Gastrocnemius medialis (tissue), 4 donors: ENCODE measurements at regions of chr16 and their contacts with region 1.

Region 1: GRCh38 chr16:8868416-8869211 is at the start of gene CARHSP1:
- DNase-seq: peak; percentile 68 to 77
- ATAC-seq: peak; percentile 81 to 90
- H3K4me3 ChIP-seq: peak within 1 kb of the TSS; percentile 68 to 94 (median 78)
- H3K27ac ChIP-seq: peak within 1 kb of the TSS; percentile 69 to 80 (median 76)
- H3K4me1 ChIP-seq: peaks cover 23 to 39% of the 10 kb centered on the region in 2 donors
- H3K27me3 ChIP-seq: peaks cover 32 to 37% (median 34%) of the 10 kb centered on the region in 3 donors
- CTCF ChIP-seq: no peak
- POLR2A ChIP-seq: peak; percentile 60 to 70
- total RNA-seq, gene CARHSP1: 12.4 to 22.3 (median 18.4) TPM

Region 2: DNA sequence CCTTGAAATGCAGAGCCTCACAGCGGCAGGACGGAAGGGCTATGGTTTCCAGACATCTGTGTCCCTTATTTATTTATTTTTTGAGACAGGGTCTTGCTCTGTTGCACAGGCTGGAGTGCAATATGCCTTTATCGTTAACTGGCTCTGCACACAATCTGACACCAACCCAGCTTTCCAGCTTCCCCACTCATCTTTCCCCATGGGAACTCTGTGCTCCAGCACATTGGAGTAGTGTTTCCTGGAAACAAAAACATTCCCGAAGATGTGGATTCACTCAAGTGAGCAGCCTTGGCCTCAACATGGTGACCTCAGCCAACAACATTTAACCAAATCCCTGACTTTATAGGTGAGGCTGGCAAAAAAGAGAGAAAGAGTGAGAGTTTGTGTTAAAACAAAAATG is 585.4 kb before region 1 on chr16:
- in situ Hi-C with region 1: no loop called
- intact Hi-C with region 1: no loop called
- DNase-seq: no peak
- ATAC-seq: no peak
- H3K4me3 ChIP-seq: no peak overlapping the region
- H3K27ac ChIP-seq: no peak overlapping the region
- H3K4me1 ChIP-seq: no peaks in the 10 kb centered on the region
- H3K27me3 ChIP-seq: no peaks in the 10 kb centered on the region
- CTCF ChIP-seq: no peak
- POLR2A ChIP-seq: no peak

Region 3: DNA sequence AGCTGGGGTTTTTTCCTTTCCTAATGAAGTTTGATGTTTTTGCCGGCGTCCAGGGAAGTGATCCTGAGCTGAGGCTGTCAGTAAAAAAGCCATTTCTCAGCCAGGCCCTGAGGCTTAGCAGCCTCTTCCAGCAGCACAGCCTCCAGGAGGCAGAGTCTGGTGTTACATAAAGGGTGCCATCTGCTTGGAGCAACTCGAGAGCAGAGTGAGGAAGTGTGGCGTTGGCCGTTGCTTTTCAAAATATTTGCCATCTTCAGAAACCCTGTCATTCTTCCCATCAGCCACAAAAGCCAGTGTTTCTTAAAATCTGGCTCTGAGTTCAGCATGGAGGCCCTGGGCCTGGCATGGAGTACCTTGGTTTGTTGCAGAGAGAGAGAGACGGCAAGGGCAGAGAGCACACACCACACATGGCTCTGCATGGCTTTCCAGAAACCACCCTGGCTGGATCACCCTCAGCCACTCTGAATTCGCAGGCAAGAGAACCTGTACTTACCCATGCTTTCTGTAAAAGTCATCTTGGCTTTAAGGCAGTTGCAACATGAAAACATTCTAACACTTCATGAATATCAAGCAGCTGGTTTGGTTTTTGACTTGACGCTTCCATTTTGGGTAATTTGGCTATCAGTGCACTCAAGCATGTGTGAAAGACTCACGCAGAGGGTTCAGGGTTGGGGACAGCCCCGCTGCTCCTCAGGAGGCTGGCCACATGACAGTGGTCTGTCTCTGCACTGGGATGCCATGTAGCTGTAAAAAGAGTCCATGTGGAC is 49.9 kb before region 1 on chr16:
- in situ Hi-C with region 1: no loop called
- intact Hi-C with region 1: loop called (anchors 5 kb)
- DNase-seq: no peak
- ATAC-seq: no peak
- H3K4me3 ChIP-seq: no peak overlapping the region
- H3K27ac ChIP-seq: no peak overlapping the region
- H3K4me1 ChIP-seq: no peaks in the 10 kb centered on the region
- H3K27me3 ChIP-seq: no peaks in the 10 kb centered on the region
- CTCF ChIP-seq: no peak
- POLR2A ChIP-seq: no peak

Region 4: DNA sequence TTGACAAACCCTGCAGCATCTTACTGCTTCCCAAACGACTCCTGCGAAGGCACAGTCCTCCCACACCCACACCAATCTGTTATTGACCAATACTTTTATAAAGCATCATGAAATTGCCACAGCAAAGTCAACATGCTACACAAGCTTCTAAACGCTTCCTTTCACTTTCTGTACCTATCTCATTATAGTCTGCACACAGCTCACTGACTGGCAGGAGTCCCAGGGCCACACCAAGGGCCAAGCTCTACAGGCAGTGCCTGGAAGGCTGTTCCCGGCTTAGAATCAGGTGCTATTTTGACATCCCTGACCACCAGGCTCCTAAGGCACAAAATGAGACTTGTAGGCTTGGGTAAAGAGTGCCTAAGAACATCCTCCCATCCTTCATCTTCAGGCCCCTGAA is 55.6 kb after region 1 on chr16:
- in situ Hi-C with region 1: no loop called
- intact Hi-C with region 1: no loop called
- DNase-seq: peak in 1 of 2 donors; percentile 59
- ATAC-seq: peak in 1 of 2 donors; percentile 81
- H3K4me3 ChIP-seq: no peak overlapping the region
- H3K27ac ChIP-seq: no peak overlapping the region
- H3K4me1 ChIP-seq: peaks cover 0 to 25% of the 10 kb centered on the region in 2 donors
- H3K27me3 ChIP-seq: no peaks in the 10 kb centered on the region
- CTCF ChIP-seq: no peak
- POLR2A ChIP-seq: no peak

Region 5: DNA sequence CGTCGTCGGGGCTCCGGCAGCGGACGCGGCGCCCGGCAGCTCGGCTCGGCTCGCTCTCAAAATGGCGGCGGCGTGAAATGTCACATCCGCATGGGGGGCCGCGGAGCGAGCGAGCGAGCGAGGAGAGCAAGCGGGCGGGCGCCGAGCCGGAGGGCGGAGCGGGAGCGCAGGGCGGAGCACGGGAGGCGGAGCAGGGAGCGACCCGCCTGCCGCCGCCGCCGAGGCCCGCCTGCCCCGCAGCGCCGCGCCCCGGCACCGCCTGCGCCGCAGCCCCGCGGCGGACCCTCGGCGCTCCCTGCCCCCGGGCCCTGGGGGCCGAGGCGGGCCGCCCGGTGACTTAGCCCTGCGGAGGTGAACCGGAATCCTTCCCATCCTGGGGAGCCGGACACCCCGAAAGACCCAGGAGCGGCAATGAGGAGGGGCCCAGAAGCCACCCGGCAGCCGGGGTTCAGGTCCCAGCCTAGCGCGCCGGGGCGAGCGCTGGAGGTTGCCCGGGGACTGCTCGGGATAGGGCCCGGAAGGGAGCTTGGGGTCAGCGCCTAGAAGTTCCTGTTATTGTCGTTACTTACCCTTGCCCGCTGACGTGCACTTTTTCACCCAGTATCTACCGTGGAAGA is 95.3 kb after region 1 on chr16 and contains the start of gene USP7:
- in situ Hi-C with region 1: no loop called
- intact Hi-C with region 1: loop called (anchors 2 kb)
- DNase-seq: peak; percentile 82 to 88
- ATAC-seq: peak; percentile 80 to 85
- H3K4me3 ChIP-seq: peak within 1 kb of the TSS; percentile 63 to 75 (median 70)
- H3K27ac ChIP-seq: peak within 1 kb of the TSS; percentile 80 to 86 (median 84)
- H3K4me1 ChIP-seq: peaks cover 35 to 40% of the 10 kb centered on the region in 2 donors
- H3K27me3 ChIP-seq: no peaks in the 10 kb centered on the region
- CTCF ChIP-seq: no peak
- POLR2A ChIP-seq: peak; percentile 63 to 73
- total RNA-seq, gene USP7: 79.7 to 99.2 (median 85.6) TPM